MCF 10A (cell line): ENCODE measurements at regions of chr10 and their contacts with region 1.

Region 1: DNA sequence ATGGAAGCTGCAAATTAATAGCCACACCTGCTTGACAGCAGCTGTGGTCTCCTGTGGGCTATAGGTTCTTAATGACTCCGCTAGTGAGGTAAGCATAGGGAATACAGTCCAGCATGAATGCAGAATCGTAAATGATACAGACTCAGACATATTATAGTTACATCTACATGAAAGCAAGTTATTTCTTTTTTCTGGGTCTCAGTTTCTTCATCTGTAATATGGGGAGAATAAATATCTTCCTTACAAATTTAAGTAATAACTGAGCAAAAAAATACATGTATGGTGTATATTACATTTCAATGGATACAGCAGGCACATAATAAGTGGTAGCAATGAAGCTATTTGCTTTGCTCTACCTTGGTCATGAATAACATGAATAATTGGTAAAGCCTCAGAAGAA is 245.9 kb upstream of the RHOBTB1 start:
- DNase-seq: no peak
- H3K4me3 Mint-ChIP-seq: no peak overlapping the region
- H3K27ac Mint-ChIP-seq: no peak overlapping the region
- H3K4me1 Mint-ChIP-seq: peaks cover 4% of the 10 kb centered on the region
- H3K27me3 Mint-ChIP-seq: no peaks in the 10 kb centered on the region
- CTCF ChIP-seq: no peak

Region 2: GRCh38 chr10:60816628-60817397 is 373.1 kb before region 1 on chr10:
- CTCF ChIA-PET with region 1: interaction called, 11 read pairs
- POLR2A ChIA-PET with region 1: no interaction called
- intact Hi-C with region 1: loop called (anchors 1 kb)
- DNase-seq: peak; percentile 81
- H3K4me3 Mint-ChIP-seq: no peak overlapping the region
- H3K27ac Mint-ChIP-seq: no peak overlapping the region
- H3K4me1 Mint-ChIP-seq: no peaks in the 10 kb centered on the region
- H3K27me3 Mint-ChIP-seq: no peaks in the 10 kb centered on the region
- CTCF ChIP-seq: peak; percentile 72

Region 3: DNA sequence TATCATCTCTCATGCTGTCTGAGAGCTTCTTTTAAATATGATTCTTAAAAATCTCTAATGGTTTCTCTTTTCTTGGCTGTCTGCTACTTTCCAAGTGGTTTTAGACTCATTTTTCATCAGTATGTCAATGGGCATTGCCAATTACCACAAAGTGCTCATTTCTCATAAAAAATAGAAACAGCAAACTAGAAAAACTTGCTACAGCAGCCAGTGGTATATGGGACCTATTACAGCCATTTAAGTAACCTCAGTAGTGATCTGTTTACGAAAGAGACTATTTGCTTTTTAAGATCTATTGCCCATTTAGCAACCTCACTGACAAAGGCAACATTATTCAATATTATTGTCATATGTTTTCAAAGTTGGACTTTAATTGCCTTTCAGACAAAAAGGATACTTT is 38.9 kb before region 1 on chr10:
- CTCF ChIA-PET with region 1: no interaction called
- POLR2A ChIA-PET with region 1: no interaction called
- intact Hi-C with region 1: no loop called
- DNase-seq: no peak
- H3K4me3 Mint-ChIP-seq: no peak overlapping the region
- H3K27ac Mint-ChIP-seq: no peak overlapping the region
- H3K4me1 Mint-ChIP-seq: no peaks in the 10 kb centered on the region
- H3K27me3 Mint-ChIP-seq: no peaks in the 10 kb centered on the region
- CTCF ChIP-seq: no peak